ENCODE measurements at regions of chr1 and their contacts with region 1.

Region 1: GRCh38 chr1:149962123-149962548 is 25.5 kb upstream of the MTMR11 start:
- DNase-seq: peak; percentile 61
- CTCF ChIP-seq: peak; percentile 74

Region 2: GRCh38 chr1:149931212-149931790 is 30.8 kb before region 1 on chr1:
- CTCF ChIA-PET with region 1: interaction called, 16 read pairs
- POLR2A ChIA-PET with region 1: no interaction called
- DNase-seq: no peak
- CTCF ChIP-seq: no peak

Region 3: DNA sequence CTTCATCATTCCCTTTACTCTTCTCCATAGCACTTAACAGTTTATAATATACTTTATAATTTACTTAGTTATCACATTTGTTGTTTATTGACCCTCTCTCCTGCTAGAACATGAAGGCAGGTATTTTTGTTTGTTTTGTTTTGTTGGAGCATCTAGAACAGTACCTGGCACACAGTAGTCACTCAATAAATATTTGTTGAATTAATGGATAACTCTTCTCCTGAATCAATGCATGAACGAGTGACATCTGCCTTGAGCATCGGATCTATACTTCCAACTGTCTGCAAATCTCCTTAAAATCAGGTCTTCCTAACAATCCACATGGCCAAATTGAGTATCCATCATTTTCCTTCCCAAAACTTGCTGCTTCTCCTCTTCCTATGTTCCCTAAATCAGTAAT is 10.4 kb after region 1 on chr1:
- CTCF ChIA-PET with region 1: interaction called, 11 read pairs
- POLR2A ChIA-PET with region 1: no interaction called
- DNase-seq: no peak
- CTCF ChIP-seq: no peak

Region 4: GRCh38 chr1:149997585-149998262 is 35.6 kb after region 1 on chr1:
- CTCF ChIA-PET with region 1: interaction called, 24 read pairs
- POLR2A ChIA-PET with region 1: no interaction called
- DNase-seq: peak; percentile 38
- CTCF ChIP-seq: no peak

Region 5: DNA sequence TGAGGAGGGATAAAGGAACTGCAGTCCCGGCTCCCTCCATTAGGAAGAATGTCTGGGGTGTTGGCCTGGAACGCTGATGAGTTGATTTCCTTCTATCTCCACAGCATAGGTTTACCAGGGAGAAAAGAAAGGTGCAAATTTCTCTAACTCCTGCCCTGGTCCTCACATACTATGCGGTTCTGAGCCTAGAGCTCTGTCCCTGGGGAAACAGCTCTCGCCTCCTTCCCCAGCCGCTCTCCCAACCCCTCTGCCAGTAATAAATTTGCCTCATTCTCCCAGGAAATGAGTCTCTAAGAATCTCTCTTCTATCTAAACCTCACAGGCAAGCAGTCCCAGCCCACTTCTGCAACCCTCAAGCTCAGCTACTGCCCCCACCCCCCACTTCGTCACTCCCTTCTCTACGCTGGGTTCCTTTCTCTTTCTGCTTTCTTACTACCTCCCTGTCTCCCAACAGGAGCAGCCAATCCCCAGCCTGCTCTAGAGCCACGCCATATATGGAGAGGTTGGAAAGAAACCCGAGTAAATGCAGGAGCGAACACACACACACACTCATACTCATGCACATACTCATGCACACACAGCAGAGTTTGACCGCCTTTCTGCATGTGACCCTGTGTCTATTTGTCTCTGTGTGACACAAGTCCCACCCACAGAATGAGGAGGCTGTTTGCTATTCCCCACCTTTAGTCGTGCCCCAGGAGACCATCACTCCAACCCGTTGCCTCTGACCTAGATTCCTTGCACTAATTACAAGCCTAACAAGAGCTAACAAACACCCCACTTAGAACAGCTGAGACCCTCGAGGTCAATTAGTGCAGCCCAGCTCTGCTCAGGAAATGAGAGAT is 200.9 kb after region 1 on chr1:
- CTCF ChIA-PET with region 1: interaction called, 23 read pairs
- POLR2A ChIA-PET with region 1: no interaction called
- DNase-seq: peak; percentile 75
- CTCF ChIP-seq: no peak

Region 6: DNA sequence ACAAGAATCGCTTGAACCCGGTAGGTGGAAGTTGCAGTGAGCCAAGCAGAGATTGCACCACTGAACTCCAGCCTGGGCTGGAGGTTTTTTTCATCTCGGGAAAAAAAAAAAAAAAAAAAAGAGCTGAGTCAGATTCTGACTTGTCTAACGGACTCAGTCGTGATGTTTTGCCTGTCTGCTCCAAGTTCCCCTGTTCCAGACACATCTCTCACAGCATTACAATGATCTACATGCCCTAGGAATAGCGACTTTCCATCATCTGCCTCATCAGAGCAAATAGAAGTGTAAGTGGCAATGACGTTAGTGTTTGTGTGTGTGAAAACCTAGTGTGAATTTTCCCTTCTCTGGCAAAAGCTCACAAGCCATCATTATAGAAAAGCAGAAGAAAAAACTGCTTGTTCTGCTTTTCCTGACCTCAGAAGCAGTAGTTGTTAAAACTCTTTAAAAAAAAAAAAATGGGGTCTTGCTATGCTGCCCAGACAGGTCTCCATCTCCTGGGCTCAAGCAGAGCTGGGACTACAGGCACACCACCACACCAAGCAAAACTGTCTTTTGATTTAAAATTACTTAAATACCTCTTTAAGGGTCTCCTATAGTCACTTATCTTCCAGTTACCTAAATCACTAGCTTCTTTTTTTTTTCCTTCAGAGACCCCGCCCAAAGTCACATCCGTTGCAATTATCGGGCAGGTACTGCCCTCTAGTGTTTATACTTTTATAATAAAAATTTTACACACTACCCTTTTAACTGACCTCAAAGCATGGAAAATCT is 224.8 kb after region 1 on chr1:
- CTCF ChIA-PET with region 1: interaction called, 24 read pairs
- POLR2A ChIA-PET with region 1: no interaction called
- DNase-seq: peak; percentile 51
- CTCF ChIP-seq: no peak

Measured in GM10248 (cell line).